ENCODE measurements at regions of chr10 and their contacts with region 1.

Region 1: DNA sequence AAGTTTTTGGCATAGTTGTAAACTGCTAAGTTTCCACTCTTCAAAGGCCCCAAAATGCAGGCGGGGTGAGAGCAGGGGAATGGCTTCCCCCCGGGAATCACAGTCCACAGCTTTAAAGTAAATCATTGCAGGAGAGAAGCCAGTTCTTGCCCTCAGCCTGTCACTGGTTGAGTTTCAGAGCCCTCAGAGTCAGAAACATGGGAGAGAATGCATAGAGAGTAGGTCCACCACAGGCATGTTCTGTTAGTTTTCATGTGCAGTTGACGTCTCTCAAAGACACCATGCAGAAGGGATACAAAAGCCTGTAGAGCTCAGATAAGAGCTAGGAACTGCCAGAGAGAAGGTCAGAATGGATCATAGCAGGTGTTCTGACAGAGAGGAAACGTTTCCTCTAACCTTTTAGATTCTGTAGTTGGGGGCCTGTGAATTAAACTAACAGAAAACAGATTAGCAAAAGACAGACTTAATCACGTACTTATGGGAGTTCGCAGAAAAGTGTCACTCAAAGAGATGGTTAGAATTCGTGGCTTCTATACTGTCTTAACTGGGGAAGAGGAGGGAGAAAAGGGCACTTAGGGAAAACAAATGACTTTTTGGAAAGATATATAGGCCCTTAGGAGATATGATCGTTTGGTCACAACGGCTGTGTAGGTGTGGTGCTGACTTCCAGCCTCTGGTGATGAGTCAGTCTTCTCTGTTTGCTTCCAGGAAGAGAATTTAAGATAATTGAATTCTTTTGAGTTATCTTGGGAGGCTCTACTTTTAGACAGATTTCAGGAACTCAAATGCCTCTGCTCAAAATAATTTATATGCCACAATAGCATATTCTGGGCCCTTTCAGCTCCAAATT is 48.0 kb upstream of the MSRB2 start:
- DNase-seq: no peak
- ATAC-seq: no peak

Region 2: DNA sequence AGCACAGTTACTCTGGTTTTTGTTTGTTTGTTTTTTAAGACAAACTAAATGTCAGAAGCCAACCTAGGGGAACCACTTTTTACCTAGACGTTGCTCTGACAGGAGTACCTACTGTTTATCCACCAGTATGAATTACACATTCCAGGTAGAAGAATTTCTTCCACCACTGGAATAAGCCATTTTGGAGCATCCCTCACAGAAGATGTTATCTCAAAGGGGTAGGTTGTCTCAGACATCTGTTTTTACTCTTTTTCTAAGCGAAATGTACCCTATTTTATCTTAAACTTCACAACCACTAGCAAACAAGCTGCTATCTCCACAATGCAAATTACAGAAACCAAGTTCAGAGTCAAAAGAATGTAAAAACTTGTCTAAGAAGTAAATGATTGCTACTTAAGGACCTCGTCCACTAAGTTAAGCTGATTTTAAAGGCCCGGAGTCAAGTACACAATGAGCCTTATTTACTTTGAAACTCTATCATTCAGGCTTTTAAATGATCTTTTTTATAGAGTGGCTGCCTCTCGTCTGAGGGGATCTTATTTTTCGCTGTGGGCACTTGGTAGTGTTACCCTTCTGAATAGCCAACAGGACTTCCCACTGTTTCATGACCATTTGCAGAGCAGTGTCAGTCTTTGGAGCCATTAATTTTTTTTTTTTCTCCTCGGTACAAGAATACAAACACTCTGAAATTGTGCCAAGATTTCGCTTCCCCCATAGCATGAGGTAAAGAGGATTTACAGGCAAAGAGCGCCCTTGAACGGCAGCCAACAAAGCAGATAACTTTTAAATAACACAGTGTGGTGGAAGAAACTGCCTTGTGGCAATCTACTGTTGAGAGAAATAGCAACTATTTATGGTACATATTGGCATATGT is 135.3 kb before region 1 on chr10:
- intact Hi-C with region 1: no loop called
- DNase-seq: no peak
- ATAC-seq: no peak

Region 3: GRCh38 chr10:23540401-23541030 is 493.1 kb after region 1 on chr10:
- intact Hi-C with region 1: loop called (anchors 10 kb)
- DNase-seq: no peak
- ATAC-seq: no peak

Measured in sciatic nerve (tissue), 2 donors.